Psoas muscle (tissue), 8 donors: ENCODE measurements at regions of chr1 and their contacts with region 1.

Region 1: GRCh38 chr1:185720633-185721272 is 13.4 kb upstream of the HMCN1 start:
- DNase-seq: no peak
- ATAC-seq: no peak
- H3K4me3 ChIP-seq: no peak overlapping the region
- H3K27ac ChIP-seq: no peak overlapping the region
- H3K4me1 ChIP-seq: no peaks in the 10 kb centered on the region
- H3K27me3 ChIP-seq: no peaks in the 10 kb centered on the region
- CTCF ChIP-seq: peak; percentile 45

Region 2: DNA sequence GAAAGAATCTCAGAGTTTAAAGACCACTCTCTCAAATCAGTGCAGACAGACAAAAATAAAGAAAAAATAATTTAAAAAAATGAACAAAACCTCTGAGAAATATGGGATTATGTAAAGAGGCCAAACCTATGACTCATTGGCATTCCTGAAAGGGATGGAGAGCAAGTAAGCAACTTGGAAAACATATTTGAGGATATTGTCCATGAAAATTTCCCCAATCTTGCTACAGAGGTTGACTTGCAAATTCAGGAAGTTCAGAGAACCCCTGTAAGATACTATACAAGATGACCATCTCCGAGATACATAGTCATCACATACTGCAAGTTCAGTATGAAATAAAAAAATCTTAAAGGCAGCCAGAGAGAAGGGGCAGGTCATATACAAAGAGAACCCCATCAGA is 360.0 kb before region 1 on chr1:
- intact Hi-C with region 1: no loop called
- DNase-seq: no peak
- ATAC-seq: no peak
- H3K4me3 ChIP-seq: no peak overlapping the region
- H3K27ac ChIP-seq: no peak overlapping the region
- H3K4me1 ChIP-seq: no peaks in the 10 kb centered on the region
- H3K27me3 ChIP-seq: no peaks in the 10 kb centered on the region
- CTCF ChIP-seq: no peak

Region 3: GRCh38 chr1:186082235-186082937 is 361.6 kb after region 1 on chr1:
- intact Hi-C with region 1: loop called in 1 of 2 experiments (anchors 10 kb)
- DNase-seq: peak; percentile 60 to 77
- ATAC-seq: peak; percentile 75 to 83 (median 77)
- H3K4me3 ChIP-seq: no peak overlapping the region
- H3K27ac ChIP-seq: no peak overlapping the region
- H3K4me1 ChIP-seq: peaks cover 3% of the 10 kb centered on the region
- H3K27me3 ChIP-seq: no peaks in the 10 kb centered on the region
- CTCF ChIP-seq: no peak

Region 4: GRCh38 chr1:186212544-186213226 is 491.9 kb after region 1 on chr1:
- intact Hi-C with region 1: loop called (anchors 5 to 10 kb)
- DNase-seq: no peak
- ATAC-seq: peak; percentile 57 to 83 (median 74)
- H3K4me3 ChIP-seq: no peak overlapping the region
- H3K27ac ChIP-seq: no peak overlapping the region
- H3K4me1 ChIP-seq: no peaks in the 10 kb centered on the region
- H3K27me3 ChIP-seq: no peaks in the 10 kb centered on the region
- CTCF ChIP-seq: peak; percentile 63